K562 (cell line): ENCODE measurements at regions of chr17 and their contacts with region 1.

Region 1: DNA sequence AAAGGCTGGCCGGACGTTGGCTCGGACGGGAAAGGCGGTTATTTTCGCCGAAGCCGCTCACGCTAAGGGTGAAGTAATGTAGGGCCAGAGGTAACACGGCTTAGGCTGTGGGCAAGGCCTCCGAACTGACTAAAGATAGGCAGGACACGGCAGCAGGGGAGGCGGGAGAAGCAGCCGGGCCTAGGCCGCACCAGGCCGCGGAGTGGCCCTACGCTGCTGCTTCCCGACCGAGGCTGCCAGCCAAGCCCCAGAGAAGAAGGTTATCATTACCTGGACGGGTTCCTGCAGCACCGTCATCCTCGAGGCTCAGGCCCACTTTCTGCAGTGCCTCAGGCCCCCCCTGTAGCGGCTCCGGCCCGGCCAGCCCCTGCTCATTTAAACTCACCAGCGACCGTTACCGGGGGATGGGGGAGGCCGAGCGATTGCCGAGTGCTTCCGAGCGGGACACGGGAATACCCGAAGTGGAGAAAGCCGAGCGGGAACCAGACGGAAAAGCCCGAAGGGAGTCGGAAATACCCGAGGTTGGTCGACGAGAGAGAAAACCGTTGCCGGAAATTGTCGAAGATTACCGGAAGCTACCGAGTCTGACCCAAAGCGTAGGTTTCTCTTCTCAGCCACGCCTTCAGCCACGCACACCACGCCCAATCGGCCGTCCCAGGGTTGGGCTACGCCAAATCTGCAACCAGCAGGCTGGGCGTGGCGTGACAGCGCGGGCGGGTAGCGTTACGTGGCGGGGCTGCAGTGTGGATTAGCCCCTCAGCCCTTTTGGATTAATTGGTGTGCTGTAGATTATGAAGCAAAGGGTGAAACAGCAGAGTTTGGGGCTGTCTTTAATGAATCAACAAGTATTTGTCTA is at the start of gene CDC27:
- DNase-seq: peak; percentile 95 to 99 (median 96)
- ATAC-seq: peak; percentile 93
- H3K4me3 ChIP-seq: peak within 1 kb of the TSS; percentile 69
- H3K27ac ChIP-seq: peak within 1 kb of the TSS; percentile 95
- H3K4me1 ChIP-seq: peaks cover 6 to 23% of the 10 kb centered on the region in 2 experiments; a peak in 3 of 5 replicates
- H3K27me3 ChIP-seq: no peaks in the 10 kb centered on the region
- CTCF ChIP-seq: no peak
- EP300 ChIP-seq: peak; percentile 9; the same call in 1 of the 2 replicates
- POLR2A ChIP-seq: peak; percentile 85
- RAD21 ChIP-seq: no peak
- polyA plus RNA-seq, gene CDC27: 28.6 to 34.5 TPM

Region 2: DNA sequence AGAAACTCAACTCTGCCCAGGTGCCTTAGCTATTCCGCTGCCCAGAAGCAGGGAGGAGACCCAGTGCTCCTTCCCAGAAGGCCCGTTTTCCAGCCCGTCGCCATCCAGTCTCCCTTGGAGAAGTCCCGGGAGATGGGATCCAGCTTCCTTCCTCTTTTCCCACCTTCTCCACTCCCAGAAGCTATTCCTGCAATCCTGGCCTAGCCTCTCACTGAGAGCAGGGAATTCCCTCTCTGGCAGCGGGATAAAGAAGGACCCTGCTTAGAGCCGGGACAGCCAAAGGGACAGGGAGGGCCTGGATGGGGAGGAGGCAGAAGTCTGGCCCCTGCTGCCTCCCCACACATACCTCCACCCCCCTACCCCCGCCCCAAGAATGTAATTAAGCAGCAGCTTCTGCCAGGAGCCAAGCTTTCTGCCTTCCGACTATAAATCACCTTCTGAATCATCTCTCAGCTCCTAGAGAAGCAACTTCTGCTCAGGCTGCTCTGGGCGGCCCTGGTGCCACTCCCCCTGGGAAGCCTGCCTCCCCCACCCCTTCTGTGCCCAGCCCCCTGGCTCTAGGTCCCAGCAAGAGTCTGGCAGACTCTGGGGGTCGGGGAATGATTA is 377.0 kb before region 1 on chr17:
- CTCF ChIA-PET with region 1: no interaction called
- POLR2A ChIA-PET with region 1: no interaction called
- in situ Hi-C with region 1: no loop called
- intact Hi-C with region 1: no loop called
- DNase-seq: peak in 2 of 4 experiments; percentile 33 to 54
- ATAC-seq: no peak; the same call in 2 of the 3 replicates
- H3K4me3 ChIP-seq: no peak overlapping the region
- H3K27ac ChIP-seq: no peak overlapping the region
- H3K4me1 ChIP-seq: peaks cover 36 to 50% of the 10 kb centered on the region in 2 experiments
- H3K27me3 ChIP-seq: no peaks in the 10 kb centered on the region
- CTCF ChIP-seq: no peak
- EP300 ChIP-seq: no peak
- POLR2A ChIP-seq: no peak
- RAD21 ChIP-seq: no peak

Region 3: DNA sequence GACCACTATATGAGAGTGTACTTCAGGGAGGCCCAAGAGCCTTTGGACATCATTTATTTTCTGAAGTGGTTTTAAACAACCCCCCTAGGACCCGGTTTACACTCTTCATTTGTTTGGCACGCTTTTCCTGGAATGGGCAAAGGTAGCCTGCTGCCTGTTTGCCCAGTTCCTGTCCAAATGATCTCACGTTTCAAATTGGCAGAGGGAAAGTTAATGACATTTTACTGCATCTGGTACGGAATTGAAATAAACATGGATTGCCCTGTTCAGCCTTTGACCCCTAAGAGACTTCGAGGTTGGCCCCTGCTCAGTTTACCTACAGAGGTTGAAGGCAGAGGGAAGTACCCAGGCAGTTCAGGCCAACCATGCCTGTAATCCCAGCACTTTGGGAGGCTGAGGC is 204.2 kb before region 1 on chr17:
- CTCF ChIA-PET with region 1: no interaction called
- POLR2A ChIA-PET with region 1: no interaction called
- in situ Hi-C with region 1: no loop called
- intact Hi-C with region 1: no loop called
- DNase-seq: no peak
- ATAC-seq: no peak
- H3K4me3 ChIP-seq: no peak overlapping the region
- H3K27ac ChIP-seq: no peak overlapping the region
- H3K4me1 ChIP-seq: no peaks in the 10 kb centered on the region
- H3K27me3 ChIP-seq: peaks cover 31 to 53% of the 10 kb centered on the region in 2 experiments
- CTCF ChIP-seq: no peak
- EP300 ChIP-seq: no peak
- POLR2A ChIP-seq: no peak
- RAD21 ChIP-seq: no peak

Region 4: GRCh38 chr17:47199627-47200324 is 10.7 kb after region 1 on chr17:
- CTCF ChIA-PET with region 1: no interaction called
- POLR2A ChIA-PET with region 1: interaction called, 24 read pairs
- in situ Hi-C with region 1: no loop called
- intact Hi-C with region 1: no loop called
- DNase-seq: no peak
- ATAC-seq: no peak
- H3K4me3 ChIP-seq: no peak overlapping the region
- H3K27ac ChIP-seq: no peak overlapping the region
- H3K4me1 ChIP-seq: peaks cover 5 to 33% of the 10 kb centered on the region in 2 experiments
- H3K27me3 ChIP-seq: no peaks in the 10 kb centered on the region
- CTCF ChIP-seq: no peak
- EP300 ChIP-seq: no peak
- POLR2A ChIP-seq: no peak
- RAD21 ChIP-seq: no peak

Region 5: GRCh38 chr17:47208744-47209488 is 19.8 kb after region 1 on chr17 and contains the start of gene MYL4:
- CTCF ChIA-PET with region 1: no interaction called
- POLR2A ChIA-PET with region 1: interaction called, 10 read pairs
- in situ Hi-C with region 1: no loop called
- intact Hi-C with region 1: loop called (anchors 2 kb)
- DNase-seq: peak; percentile 67 to 89 (median 74)
- ATAC-seq: peak; percentile 72
- H3K4me3 ChIP-seq: peak within 1 kb of the TSS; percentile 51
- H3K27ac ChIP-seq: peak within 1 kb of the TSS; percentile 89
- H3K4me1 ChIP-seq: peaks cover 28 to 51% of the 10 kb centered on the region in 2 experiments
- H3K27me3 ChIP-seq: no peaks in the 10 kb centered on the region
- CTCF ChIP-seq: no peak
- EP300 ChIP-seq: no peak; the same call in 1 of the 2 replicates
- POLR2A ChIP-seq: peak; percentile 70
- RAD21 ChIP-seq: no peak
- polyA plus RNA-seq, gene MYL4: 287 to 423 TPM

Region 6: GRCh38 chr17:47323382-47324222 is 134.5 kb after region 1 on chr17 and contains the start of gene EFCAB13:
- CTCF ChIA-PET with region 1: no interaction called
- POLR2A ChIA-PET with region 1: interaction called, 3 read pairs
- in situ Hi-C with region 1: no loop called
- intact Hi-C with region 1: loop called (anchors 1 kb)
- DNase-seq: peak; percentile 93 to 98 (median 94)
- ATAC-seq: peak; percentile 100
- H3K4me3 ChIP-seq: peak within 1 kb of the TSS; percentile 45
- H3K27ac ChIP-seq: peak within 1 kb of the TSS; percentile 68
- H3K4me1 ChIP-seq: peaks cover 0 to 12% of the 10 kb centered on the region in 2 experiments; a peak in 2 of 5 replicates
- H3K27me3 ChIP-seq: no peaks in the 10 kb centered on the region
- CTCF ChIP-seq: peak; percentile 34 to 36 (median 36); a peak in 3 of 6 replicates
- EP300 ChIP-seq: 0 out of 2 replicates have a peak, but pooled peaks have one; percentile 5
- POLR2A ChIP-seq: peak; percentile 89
- RAD21 ChIP-seq: peak in 1 of 2 experiments; percentile 14; a peak in 1 of 4 replicates
- polyA plus RNA-seq, gene EFCAB13: 0.46 TPM

Region 7: DNA sequence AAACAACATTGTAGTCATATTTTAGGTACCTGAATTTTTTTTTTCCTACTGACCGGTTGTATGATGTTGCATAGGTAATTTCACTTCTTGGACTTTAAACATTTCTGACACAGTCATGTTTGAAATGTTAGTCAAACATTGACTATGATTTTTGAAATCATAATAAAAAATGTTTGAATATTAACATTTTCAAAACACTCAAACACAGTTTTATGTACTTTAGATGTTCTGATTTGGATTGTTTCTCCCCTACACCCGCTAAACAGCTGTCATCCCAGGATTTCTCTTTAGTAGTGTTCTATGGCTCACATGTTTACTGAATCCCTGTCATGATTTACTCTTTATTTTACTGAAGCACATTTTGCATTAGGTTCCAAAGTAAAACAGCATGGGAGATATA is 238.9 kb after region 1 on chr17:
- CTCF ChIA-PET with region 1: no interaction called
- POLR2A ChIA-PET with region 1: no interaction called
- in situ Hi-C with region 1: no loop called
- intact Hi-C with region 1: no loop called
- DNase-seq: no peak
- ATAC-seq: no peak
- H3K4me3 ChIP-seq: no peak overlapping the region
- H3K27ac ChIP-seq: no peak overlapping the region
- H3K4me1 ChIP-seq: no peaks in the 10 kb centered on the region
- H3K27me3 ChIP-seq: no peaks in the 10 kb centered on the region
- CTCF ChIP-seq: no peak
- EP300 ChIP-seq: no peak
- POLR2A ChIP-seq: no peak
- RAD21 ChIP-seq: no peak